ENCODE measurements at regions of chr14 and their contacts with region 1.

Region 1: GRCh38 chr14:23929822-23930294 is 23.7 kb upstream of the DHRS4 start:
- DNase-seq: peak; percentile 57 to 83
- ATAC-seq: peak; percentile 76 to 83 (median 80)
- H3K4me3 ChIP-seq: no peak overlapping the region
- H3K27ac ChIP-seq: no peak overlapping the region
- H3K4me1 ChIP-seq: peaks cover 0 to 7% (median 0%) of the 10 kb centered on the region in 9 donors
- H3K27me3 ChIP-seq: no peaks in the 10 kb centered on the region
- CTCF ChIP-seq: peak; percentile 80 to 96 (median 92)

Region 2: GRCh38 chr14:23588884-23589598 is 340.8 kb before region 1 on chr14:
- intact Hi-C with region 1: loop called in 5 of 10 experiments (anchors 1 to 10 kb)
- DNase-seq: peak; percentile 83 to 85
- ATAC-seq: peak; percentile 78 to 97 (median 93)
- H3K4me3 ChIP-seq: no peak overlapping the region
- H3K27ac ChIP-seq: no peak overlapping the region
- H3K4me1 ChIP-seq: peaks cover 0 to 8% (median 7%) of the 10 kb centered on the region in 9 donors
- H3K27me3 ChIP-seq: peaks cover 0 to 14% (median 0%) of the 10 kb centered on the region in 7 donors
- CTCF ChIP-seq: peak; percentile 32 to 83 (median 71)

Region 3: DNA sequence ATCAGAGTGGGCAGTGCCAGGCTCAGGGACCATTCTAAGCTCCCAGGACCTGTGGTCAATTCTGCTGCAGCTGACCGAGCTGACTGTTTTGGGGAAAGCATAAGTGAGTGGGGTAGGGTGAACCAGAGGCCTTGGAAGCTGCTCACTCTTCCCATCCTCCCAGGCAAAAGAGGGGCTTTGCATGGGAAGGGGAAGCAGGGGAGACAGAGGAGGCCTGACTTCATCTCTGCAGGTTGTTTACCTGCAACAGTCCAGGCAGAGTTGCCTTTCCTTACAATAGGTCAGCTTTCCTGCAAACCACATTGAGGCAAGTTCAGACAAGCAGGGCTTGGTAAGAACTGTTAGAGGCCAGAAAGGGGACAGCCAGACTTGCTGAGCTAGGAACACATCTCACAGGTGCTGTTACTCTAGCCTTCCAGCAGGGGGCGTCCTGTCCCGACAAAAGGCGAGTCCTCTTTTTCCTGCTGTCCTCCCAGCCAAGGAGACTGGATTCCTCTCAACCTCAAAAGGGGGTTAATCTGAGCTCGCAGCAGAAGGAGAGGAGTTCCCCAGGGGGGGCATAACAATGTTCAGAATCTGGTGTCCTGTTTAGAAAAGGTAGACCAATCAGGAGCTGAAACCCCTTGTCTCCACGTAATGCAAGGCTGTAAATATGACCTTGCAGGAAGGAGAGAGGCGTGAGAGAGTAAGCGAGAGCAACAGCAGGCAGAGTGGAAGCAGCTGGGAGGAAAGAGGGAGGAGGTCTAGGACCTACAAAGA is 298.0 kb before region 1 on chr14:
- intact Hi-C with region 1: loop called (anchors 1 to 5 kb)
- DNase-seq: peak; percentile 72 to 82
- ATAC-seq: peak; percentile 78 to 96 (median 90)
- H3K4me3 ChIP-seq: peak overlapping the region in 5 of 10 donors; percentile 5 to 37 (median 24)
- H3K27ac ChIP-seq: no peak overlapping the region
- H3K4me1 ChIP-seq: peaks cover 0 to 15% (median 9%) of the 10 kb centered on the region in 9 donors
- H3K27me3 ChIP-seq: peaks cover 0 to 8% (median 0%) of the 10 kb centered on the region in 7 donors
- CTCF ChIP-seq: peak; percentile 80 to 97 (median 95)

Region 4: DNA sequence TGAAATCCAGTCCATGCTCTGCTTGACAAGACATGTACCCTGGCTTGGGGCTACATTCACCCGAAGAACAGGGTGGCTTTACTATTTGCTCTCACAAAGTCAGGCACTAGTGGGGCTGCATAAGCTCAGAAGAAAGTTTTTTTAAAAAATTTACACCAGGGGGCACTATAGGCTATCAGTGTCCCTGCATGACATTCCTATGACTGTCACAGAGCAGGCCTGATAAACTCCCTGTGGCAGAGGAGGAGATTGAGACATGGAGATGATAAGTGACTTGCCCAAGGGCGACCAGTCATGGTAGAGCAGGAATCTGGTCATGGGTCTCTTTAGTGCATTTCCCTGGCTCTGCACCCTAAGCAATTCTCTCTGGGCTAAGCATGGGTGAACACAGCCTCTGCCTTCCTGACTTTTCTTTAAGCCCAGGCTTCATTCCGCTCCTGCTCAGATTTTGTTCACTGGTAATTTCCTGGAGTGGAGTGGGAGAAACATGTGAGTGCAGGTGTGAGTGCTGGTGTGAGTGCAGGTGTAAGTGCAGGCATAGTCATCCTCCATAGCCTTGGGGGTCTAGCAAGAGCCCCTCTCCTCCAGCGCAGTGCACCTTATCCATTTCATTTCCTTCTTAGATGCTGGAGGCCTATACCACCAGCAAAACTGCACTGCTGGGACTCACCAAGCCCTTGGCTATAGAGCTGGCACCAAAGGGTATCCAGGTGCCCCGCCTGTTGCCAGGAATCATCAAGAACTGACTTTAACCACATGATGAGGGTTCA is 202.1 kb before region 1 on chr14:
- intact Hi-C with region 1: loop called in 2 of 10 experiments (anchors 5 to 10 kb)
- DNase-seq: no peak
- ATAC-seq: peak in 7 of 8 donors; percentile 16 to 79 (median 48)
- H3K4me3 ChIP-seq: no peak overlapping the region
- H3K27ac ChIP-seq: no peak overlapping the region
- H3K4me1 ChIP-seq: no peaks in the 10 kb centered on the region
- H3K27me3 ChIP-seq: peaks cover 0 to 9% (median 0%) of the 10 kb centered on the region in 7 donors
- CTCF ChIP-seq: peak in 8 of 9 donors; percentile 5 to 43 (median 32)

Measured in heart right ventricle (tissue), 16 donors.